ENCODE measurements at regions of chr19 and their contacts with region 1.

Region 1: GRCh38 chr19:11137542-11138384 is 17.8 kb downstream of the SPC24 start:
- DNase-seq: peak; percentile 35 to 69 (median 54)
- H3K4me3 ChIP-seq: peak overlapping the region; percentile 26 to 83 (median 42)
- H3K4me3 Mint-ChIP-seq: peak overlapping the region; percentile 89 to 98
- H3K27ac ChIP-seq: no peak overlapping the region
- H3K27ac Mint-ChIP-seq: peak overlapping the region in 4 of 7 donors; percentile 37 to 80 (median 62)
- H3K4me1 ChIP-seq: peaks cover 25 to 35% of the 10 kb centered on the region in 2 donors
- H3K4me1 Mint-ChIP-seq: peaks cover 33% of the 10 kb centered on the region
- H3K27me3 ChIP-seq: peaks cover 0 to 6% of the 10 kb centered on the region in 2 donors
- H3K27me3 Mint-ChIP-seq: peaks cover 17 to 22% (median 21%) of the 10 kb centered on the region in 3 donors
- CTCF ChIP-seq: peak; percentile 76

Region 2: DNA sequence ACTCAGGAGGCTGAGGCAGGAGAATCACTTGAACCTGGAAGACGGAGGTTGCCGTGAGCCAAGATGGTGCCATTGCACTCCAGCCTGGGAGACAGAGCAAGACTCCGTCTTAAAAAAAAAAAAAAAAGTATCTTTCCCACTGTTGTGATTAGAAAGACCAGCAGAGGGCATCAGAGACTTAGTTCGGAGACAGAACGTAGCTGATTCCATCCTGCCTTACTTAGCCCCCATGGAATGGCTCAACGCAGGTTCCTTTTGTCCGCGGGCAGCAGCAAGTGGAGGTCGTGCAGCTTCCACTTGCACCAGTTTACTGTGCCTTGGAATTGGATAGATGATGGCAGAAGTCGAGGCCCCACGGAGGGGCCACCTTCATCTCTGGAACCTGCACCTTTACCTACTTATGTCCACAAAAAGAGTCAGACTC is 201.1 kb before region 1 on chr19:
- intact Hi-C with region 1: loop called in 1 of 2 experiments (anchors 10 kb)
- DNase-seq: peak; percentile 39 to 58 (median 55)
- H3K4me3 ChIP-seq: no peak overlapping the region
- H3K4me3 Mint-ChIP-seq: no peak overlapping the region
- H3K27ac ChIP-seq: no peak overlapping the region
- H3K27ac Mint-ChIP-seq: peak overlapping the region in 2 of 7 donors; percentile 25 to 61
- H3K4me1 ChIP-seq: peaks cover 0 to 3% of the 10 kb centered on the region in 2 donors
- H3K4me1 Mint-ChIP-seq: peaks cover 7% of the 10 kb centered on the region
- H3K27me3 ChIP-seq: no peaks in the 10 kb centered on the region
- H3K27me3 Mint-ChIP-seq: peaks cover 0 to 1% (median 0%) of the 10 kb centered on the region in 3 donors
- CTCF ChIP-seq: peak; percentile 70

Region 3: DNA sequence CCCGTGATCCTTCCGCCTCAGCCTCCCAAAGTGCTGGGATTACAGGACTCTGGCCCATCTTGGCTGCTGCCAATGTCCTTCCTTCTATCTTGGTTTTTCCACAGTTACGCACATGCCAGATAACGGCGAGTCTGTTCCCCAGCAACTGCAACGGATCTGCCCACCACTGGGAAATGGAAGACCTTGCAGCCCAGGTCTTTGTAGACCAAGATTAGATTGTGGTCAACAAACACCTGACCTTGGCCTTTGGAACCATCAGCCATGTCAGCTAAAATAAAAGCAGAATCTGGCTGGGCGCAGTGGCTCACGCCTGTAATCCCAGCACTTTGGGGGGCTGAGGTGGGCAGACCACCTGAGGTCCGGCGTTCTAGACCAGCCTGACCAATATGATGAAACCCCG is 58.9 kb before region 1 on chr19:
- intact Hi-C with region 1: loop called in 1 of 2 experiments (anchors 10 kb)
- DNase-seq: no peak
- H3K4me3 ChIP-seq: no peak overlapping the region
- H3K4me3 Mint-ChIP-seq: no peak overlapping the region
- H3K27ac ChIP-seq: no peak overlapping the region
- H3K27ac Mint-ChIP-seq: no peak overlapping the region
- H3K4me1 ChIP-seq: peaks cover 20 to 22% of the 10 kb centered on the region in 2 donors
- H3K4me1 Mint-ChIP-seq: peaks cover 25% of the 10 kb centered on the region
- H3K27me3 ChIP-seq: no peaks in the 10 kb centered on the region
- H3K27me3 Mint-ChIP-seq: peaks cover 2 to 13% (median 9%) of the 10 kb centered on the region in 3 donors
- CTCF ChIP-seq: no peak

Region 4: GRCh38 chr19:11203194-11204075 is 65.7 kb after region 1 on chr19:
- intact Hi-C with region 1: loop called (anchors 5 kb)
- DNase-seq: peak; percentile 69 to 86 (median 72)
- H3K4me3 ChIP-seq: no peak overlapping the region
- H3K4me3 Mint-ChIP-seq: peak overlapping the region in 1 of 2 donors; percentile 28
- H3K27ac ChIP-seq: no peak overlapping the region
- H3K27ac Mint-ChIP-seq: peak overlapping the region in 3 of 7 donors; percentile 63 to 64 (median 64)
- H3K4me1 ChIP-seq: peaks cover 0 to 11% of the 10 kb centered on the region in 2 donors
- H3K4me1 Mint-ChIP-seq: peaks cover 11% of the 10 kb centered on the region
- H3K27me3 ChIP-seq: no peaks in the 10 kb centered on the region
- H3K27me3 Mint-ChIP-seq: peaks cover 4 to 8% (median 7%) of the 10 kb centered on the region in 3 donors
- CTCF ChIP-seq: peak; percentile 91

Measured in CD14-positive monocyte (primary cell).